T-cell (primary cell): ENCODE measurements at regions of chr16 and their contacts with region 1.

Region 1: DNA sequence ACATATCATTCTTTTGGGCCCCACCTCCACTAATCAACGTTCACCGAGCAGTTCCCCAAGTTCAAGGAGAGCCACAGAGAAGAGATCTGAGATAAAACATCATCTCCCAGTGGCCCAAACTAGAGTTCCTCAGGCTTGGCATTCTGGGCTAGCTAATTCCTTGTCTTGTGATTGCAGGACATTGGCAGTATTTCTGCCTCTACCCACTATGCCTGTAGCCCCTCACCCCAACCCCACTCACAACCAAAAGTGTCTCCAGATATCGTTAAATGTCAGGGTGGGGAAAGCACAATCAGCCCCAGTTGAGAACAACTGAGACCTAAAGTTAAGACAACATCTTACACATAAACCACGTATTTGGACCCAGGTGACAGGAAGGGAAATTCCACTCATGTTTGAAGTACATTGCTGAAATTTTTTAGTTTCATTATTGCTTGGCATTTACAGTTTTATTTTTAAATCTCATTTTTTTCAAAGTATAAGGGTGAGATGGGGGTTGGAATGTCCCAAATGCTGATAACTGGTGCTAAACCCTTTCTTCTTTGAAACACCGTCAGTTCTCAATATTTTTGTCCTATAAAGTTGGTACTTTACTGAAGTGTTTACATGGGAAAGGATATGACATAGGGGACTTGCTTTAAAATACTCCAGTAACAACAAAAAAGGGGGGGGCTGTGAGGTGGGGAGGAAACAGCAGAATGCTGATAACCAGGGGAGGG is 13.6 kb downstream of the ZC3H7A start:
- DNase-seq: peak in 32 of 35 experiments; percentile 29 to 90 (median 60)
- ATAC-seq: peak; percentile 75 to 85 (median 78)
- H3K4me3 ChIP-seq: peak overlapping the region; percentile 23 to 36
- H3K4me3 Mint-ChIP-seq: peak overlapping the region; percentile 80 to 83 (median 80)
- H3K27ac ChIP-seq: peak overlapping the region; percentile 97
- H3K27ac Mint-ChIP-seq: peak overlapping the region; percentile 95 to 97
- H3K4me1 ChIP-seq: peaks cover 38 to 67% of the 10 kb centered on the region in 2 experiments
- H3K4me1 Mint-ChIP-seq: peaks cover 66 to 71% (median 69%) of the 10 kb centered on the region in 3 donors
- H3K27me3 ChIP-seq: no peaks in the 10 kb centered on the region
- H3K27me3 Mint-ChIP-seq: no peaks in the 10 kb centered on the region

Region 2: GRCh38 chr16:11679941-11680911 is 103.3 kb before region 1 on chr16:
- CTCF ChIA-PET with region 1: no interaction called
- POLR2A ChIA-PET with region 1: interaction called in 1 of 2 experiments, 12 read pairs
- DNase-seq: no peak
- ATAC-seq: no peak
- H3K4me3 ChIP-seq: no peak overlapping the region
- H3K4me3 Mint-ChIP-seq: peak overlapping the region in 1 of 3 donors; percentile 52
- H3K27ac ChIP-seq: peak overlapping the region; percentile 42
- H3K27ac Mint-ChIP-seq: peak overlapping the region; percentile 92
- H3K4me1 ChIP-seq: peaks cover 14 to 40% of the 10 kb centered on the region in 2 experiments
- H3K4me1 Mint-ChIP-seq: peaks cover 45 to 73% (median 67%) of the 10 kb centered on the region in 3 donors
- H3K27me3 ChIP-seq: no peaks in the 10 kb centered on the region
- H3K27me3 Mint-ChIP-seq: no peaks in the 10 kb centered on the region

Region 3: DNA sequence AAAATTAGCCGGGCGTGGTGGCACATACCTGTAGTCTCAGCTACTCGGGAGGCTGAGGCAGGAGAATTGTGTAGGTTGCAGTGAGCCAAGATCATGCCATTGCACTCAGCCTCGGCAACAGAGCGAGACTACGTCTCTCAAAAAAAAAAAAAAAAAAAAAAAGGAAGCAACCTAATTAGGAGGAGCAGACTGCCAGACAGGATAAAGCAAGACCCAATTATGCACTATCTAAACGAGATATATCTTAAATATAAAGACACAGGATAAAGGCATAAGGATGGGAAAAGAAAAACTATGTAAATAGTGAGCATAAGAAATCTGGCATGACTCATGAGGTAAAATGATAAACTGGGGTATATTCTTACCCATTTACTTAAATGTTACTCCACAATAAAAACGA is 45.8 kb before region 1 on chr16:
- CTCF ChIA-PET with region 1: interaction called in 1 of 2 experiments, 11 read pairs
- POLR2A ChIA-PET with region 1: interaction called in 1 of 2 experiments, 5 read pairs
- DNase-seq: no peak
- ATAC-seq: no peak
- H3K4me3 ChIP-seq: no peak overlapping the region
- H3K4me3 Mint-ChIP-seq: peak overlapping the region in 1 of 3 donors; percentile 96
- H3K27ac ChIP-seq: no peak overlapping the region
- H3K27ac Mint-ChIP-seq: no peak overlapping the region
- H3K4me1 ChIP-seq: peaks cover 5 to 36% of the 10 kb centered on the region in 2 experiments
- H3K4me1 Mint-ChIP-seq: peaks cover 63 to 71% (median 69%) of the 10 kb centered on the region in 3 donors
- H3K27me3 ChIP-seq: no peaks in the 10 kb centered on the region
- H3K27me3 Mint-ChIP-seq: no peaks in the 10 kb centered on the region